GM13976 (cell line): ENCODE measurements at regions of chr9 and their contacts with region 1.

Region 1: DNA sequence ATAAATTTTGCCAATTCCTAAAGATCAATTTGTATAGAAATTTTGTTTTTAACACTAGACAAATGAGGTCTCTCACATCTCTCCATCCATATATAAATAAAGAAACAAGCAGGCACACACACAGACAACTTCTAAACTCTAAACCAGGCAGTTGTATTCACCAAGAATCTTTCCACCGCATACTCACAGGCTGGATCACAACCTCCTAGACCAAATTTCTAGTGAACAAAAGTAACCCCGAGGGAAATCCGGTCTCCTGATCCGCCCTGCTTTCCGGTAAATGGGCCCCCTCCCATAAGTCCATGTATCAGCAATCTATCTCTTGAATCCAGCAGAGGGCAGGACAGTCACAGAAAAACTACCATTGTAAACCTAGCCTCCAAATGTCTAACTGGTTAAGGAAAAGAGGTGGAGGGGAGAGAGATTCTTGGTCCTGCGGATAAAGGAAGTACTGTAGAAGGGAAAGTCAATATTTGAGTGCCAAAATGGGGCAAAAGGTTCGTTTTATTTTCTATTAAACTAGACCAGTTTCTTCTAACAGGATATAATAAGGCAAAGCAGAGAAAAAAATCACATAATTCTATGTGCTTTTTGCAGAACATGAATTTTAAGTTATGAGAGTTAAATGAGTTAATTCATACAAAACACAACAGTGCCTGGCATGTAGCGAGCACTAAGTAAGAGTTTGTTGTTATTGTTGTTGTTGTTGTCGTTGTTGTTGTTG is 4.8 kb upstream of the SMU1 start:
- DNase-seq: peak; percentile 78
- CTCF ChIP-seq: peak; percentile 59

Region 2: DNA sequence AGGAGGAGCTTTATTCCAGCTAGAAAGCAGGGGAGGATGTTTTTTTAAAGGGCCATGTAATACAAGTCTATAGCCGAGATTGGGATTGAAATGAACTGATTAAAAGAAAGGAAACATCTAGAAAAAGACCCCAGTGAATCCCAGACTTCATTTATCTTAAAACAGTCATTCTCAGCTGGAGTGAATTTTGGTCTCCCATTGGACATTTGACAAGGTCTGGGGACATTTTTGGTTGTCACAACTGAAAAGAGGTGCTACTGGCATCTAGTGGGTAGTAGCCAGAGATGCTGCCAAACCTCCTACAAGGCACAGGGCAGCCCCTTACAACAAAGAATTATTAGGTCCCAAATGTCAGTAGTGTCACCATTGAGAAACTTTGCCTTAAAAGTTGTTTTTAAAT is 142.4 kb after region 1 on chr9:
- in situ Hi-C with region 1: loop called (anchors 5 kb)
- DNase-seq: no peak
- CTCF ChIP-seq: no peak